ENCODE measurements at regions of chr6 and their contacts with region 1.

Region 1: DNA sequence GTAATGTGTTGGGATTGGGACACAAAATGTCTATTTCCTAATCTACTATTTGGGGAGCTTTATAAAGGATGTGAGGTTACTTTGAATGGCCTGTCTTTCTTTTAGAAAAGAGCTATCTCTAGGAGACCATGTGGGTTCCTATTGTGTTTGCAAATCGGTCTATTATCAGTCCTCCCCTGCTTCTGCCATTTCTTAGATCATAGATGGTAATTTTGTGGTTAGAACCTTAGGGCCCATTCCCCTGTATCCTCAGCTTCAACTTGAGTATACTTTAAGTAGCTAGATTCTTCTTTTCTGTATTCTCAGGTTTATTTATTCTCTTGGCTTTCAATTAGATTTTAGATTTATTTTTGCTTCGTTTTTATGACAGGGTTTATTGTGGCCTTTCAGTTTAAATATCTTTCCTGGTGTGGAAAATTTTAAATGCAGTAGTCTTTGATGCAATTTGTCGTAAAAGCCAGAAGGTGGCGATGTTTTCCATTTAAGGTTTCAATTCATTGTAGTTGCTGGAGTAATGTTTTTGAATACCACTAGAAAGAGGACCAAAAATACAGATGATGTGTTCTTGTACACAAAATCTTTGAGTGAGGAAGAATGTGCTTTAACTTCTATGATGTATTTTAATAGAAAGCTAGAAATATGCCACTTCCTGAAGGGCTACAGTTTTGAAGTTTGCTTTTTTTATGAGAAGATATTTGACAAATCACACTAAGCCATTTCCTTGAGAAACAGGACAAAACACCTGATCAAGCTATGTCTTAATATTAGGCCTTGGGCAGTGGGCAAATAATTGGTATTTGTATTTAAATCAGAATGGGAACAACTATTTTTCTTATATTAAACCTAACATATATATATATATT is 20.3 kb downstream of the TBPL1 start:
- DNase-seq: no peak

Region 2: DNA sequence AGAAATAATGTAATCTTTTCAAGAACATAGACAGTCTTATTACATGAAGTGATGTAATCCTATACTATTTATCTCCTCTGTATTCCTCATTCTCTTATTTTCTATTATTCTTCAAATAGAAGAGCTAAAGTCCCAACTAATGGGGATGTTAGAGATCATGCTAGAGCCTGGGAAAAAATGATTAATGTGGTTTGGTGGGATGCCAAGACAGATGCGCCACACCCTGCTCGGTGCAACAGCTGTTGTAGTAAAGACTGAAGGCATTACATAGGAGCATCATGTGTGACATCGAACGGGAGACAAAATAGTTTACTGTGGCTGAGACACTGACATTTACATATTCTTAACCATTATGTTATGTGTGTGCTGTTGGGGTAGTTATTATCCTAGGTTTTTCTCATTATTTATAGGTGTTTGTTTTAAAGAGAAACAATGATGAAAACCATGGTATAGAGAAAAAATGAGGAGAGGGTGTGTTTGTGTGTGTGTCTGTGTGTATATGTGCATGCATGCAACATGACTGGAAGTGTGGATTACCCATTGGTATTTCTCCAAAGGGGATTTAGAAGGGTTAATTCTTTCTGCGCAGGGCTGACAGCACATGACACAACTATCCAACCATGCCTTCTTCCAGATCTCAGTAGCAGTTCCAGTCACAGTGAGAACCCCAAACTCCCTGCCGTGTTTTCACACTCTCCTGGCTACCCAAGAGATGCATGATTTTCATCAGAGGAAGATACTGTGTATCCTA is 576.9 kb before region 1 on chr6:
- intact Hi-C with region 1: no loop called
- DNase-seq: no peak

Region 3: DNA sequence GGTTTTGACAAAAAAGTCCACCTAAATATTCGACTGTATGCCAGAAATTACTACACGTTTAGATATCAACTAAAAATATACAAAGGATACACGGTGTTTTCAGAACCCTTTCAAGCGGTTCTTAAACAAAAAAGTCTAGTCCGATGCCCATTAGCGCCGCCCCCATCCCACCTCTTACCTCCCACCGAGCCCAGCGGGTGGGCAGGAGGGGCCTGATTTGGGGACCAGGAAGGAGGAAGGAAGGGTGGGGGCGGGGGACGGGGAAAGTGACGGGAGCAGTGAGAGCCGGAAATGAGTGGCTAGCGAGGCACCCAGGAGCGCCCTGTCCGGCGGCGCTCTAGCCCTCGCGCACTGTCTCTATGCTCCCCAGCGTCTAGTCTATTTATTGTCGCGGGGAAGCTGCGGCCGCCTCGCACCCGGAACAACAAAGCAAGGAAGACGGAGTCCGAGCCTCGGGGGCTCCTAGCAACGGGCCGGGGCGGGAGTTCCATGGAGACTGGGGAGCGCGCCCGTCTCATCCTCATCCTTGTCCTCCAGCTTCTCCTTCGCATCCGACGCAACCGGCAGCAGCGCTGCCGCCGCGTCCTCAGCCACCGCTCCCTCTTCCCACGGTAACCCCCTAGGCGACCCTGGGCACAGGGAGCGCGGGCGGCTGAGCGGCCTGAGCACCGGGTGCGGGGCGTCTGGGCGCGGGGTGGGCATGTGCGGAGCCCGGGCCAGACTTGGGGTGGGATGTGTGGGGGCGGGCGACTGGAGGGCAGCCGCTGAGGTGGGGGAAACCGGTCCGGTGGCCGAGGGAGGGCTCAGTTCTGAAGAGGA is 20.3 kb before region 1 on chr6 and contains the start of gene TBPL1:
- intact Hi-C with region 1: loop called (anchors 1 kb)
- DNase-seq: peak; percentile 98
- total RNA-seq, gene TBPL1: 12.2 TPM

Region 4: DNA sequence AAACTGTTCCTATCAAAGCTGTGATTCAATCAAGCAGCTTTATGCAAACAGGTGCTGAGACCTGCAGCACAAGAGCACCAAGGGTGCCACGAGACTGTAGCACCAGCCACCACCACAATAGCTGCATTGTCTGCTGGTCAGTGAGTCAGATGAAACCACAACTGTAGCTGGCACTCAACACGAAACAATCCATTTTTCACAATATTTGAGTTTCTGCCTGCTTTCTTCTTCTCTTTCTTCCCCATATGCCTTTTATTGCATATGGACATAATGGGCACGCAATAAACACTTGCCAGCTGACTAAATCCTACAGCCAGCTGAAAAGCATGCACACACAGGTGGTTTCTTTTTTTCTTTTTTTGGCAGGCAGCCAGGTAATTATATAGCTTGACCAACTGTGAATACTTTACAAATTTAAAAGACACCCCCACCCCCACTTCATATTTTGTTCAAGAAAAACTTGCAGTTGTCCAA is 62.5 kb after region 1 on chr6:
- intact Hi-C with region 1: no loop called
- DNase-seq: no peak

Measured in cardiac septum (tissue), 1 donor.